ENCODE measurements at regions of chr7 and their contacts with region 1.

Region 1: DNA sequence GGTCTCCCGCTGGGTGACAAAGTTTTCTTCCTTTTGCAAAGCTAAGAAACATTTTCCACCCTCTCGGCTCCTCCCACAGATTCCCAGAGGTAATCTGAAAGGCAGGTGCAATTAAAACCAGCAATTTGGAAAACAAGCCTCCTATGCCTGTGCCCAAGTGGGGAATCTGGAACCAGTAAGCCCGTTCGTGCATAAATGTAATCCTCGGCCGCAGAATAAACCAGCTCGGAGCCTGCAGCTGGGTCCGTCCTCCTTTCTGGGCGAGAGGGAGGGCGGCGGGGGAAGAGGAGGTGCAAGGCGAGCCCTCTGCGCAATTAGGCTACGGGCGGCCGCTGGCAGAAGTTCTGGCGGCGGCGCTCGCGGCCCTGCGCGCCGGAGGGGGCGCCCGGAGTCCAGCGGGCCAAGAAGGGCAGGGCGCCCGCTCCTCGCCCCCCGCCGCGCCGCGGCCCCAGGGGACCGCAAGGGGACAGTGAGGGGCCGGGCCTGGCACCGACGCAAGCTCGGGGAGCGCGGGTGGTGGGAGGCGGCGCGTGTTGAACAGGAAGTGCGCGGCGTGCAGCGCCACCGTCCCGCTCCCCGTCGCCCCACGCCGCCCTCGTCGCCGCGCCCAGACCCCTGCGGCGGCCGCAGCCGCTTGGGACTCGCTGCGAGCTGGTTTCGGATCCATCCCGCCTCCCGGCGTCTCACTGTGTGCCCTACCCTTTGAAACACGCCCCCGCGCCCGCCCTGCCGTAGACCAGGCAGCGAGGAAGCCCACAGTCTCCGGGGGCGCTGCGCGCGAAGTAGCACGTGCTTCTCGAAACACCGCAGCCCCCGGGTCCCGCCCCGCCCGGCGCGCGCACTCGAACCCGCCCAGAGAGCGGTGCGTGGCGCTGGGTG is at the start of gene PRKAG2:
- DNase-seq: peak in 1 of 2 donors; percentile 87
- H3K4me3 ChIP-seq: peak within 1 kb of the TSS; percentile 93 to 95
- H3K27ac ChIP-seq: peak within 1 kb of the TSS; percentile 76 to 78
- H3K4me1 ChIP-seq: peaks cover 5 to 18% of the 10 kb centered on the region in 2 donors
- H3K27me3 ChIP-seq: no peaks in the 10 kb centered on the region
- CTCF ChIP-seq: peak in 1 of 3 experiments; percentile 3
- total RNA-seq, gene PRKAG2: 26.7 TPM

Region 2: DNA sequence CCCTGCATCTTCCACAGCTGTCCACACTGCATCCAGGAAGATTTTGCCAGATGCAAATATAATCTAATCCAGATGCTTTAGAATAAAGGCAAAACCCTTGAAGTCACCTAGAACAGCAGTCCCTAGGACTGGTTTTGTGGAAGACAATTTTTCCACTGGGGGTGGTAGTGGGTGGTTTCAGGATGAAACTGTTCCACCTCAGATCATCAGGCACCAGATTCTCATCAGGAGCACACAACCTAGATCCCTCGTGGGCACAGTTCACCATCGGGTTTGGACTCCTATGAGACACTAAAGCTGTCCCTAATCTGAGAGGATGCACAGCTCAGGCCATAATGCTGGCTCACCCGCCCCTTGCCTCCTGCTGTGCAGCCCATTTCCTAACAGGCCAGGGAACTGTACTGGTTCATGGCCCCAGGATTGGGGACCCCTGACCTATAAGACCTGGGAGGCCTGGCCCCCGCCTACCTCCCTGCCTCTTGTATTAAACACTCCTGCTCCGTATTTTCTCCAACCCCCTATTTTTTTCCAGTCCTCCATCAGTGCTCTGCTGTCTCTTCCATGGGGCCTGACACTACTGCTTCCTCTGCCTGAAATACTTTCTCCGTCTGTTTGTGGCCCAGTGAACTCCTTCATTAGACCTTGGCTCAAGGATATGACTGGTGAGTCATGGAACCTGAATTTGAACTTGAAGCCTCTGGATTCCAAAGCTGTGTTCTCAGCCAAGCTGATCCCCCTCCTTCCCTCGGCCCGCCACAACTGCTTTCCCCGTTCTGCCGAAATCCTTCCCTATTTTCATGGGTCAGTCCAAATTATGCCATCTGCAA is 277.5 kb before region 1 on chr7:
- intact Hi-C with region 1: loop called (anchors 10 kb)
- DNase-seq: peak in 1 of 2 donors; percentile 74
- H3K4me3 ChIP-seq: no peak overlapping the region
- H3K27ac ChIP-seq: peak overlapping the region; percentile 71 to 85
- H3K4me1 ChIP-seq: peaks cover 0 to 23% of the 10 kb centered on the region in 2 donors
- H3K27me3 ChIP-seq: no peaks in the 10 kb centered on the region
- CTCF ChIP-seq: no peak

Region 3: GRCh38 chr7:151648429-151648828 is 228.7 kb before region 1 on chr7:
- intact Hi-C with region 1: no loop called
- DNase-seq: peak in 1 of 2 donors; percentile 37
- H3K4me3 ChIP-seq: no peak overlapping the region
- H3K27ac ChIP-seq: no peak overlapping the region
- H3K4me1 ChIP-seq: peaks cover 7 to 13% of the 10 kb centered on the region in 2 donors
- H3K27me3 ChIP-seq: no peaks in the 10 kb centered on the region
- CTCF ChIP-seq: no peak

Region 4: DNA sequence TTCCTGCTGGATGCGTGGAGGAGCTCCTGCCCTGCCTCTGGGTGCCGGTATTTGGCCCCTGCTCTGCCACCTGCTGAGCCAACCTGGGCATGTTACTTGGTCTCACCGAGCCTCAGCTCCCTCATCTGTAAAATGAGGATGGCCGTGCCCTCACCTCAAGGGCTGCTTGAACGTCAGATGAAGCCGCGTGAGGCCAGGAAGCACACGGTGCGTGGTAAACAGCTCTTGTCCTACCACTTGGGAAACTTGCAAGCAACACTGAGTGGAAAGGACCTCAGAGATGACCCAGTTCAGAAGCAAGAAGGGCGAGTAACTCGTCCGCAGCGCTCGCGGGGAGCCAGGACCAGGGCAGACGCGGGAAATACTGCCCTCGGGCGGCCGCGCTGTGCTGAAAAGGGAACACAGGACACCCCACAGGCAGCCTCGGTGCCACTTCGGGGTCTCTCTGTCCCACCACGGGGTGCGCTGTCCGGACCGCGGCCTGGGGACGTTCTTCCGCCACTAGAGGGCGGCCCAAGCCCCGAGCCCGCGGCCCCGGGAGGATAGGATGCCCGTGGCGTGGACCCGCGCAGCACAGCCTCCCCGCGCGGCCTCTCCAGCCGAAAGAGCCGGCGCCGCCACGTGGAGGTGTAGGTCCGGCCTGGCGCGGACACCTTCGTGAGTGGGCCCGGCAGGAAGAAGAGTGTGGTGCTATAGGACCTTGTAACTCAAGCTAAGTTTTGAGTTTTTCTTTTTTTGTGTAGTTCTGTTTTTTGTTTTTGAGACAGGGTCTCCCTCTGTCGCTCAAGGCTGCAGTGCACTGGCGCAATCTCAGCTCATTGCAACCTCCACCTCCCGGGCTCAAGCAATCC is 94.3 kb before region 1 on chr7:
- intact Hi-C with region 1: loop called (anchors 5 kb)
- DNase-seq: peak in 1 of 2 donors; percentile 83
- H3K4me3 ChIP-seq: peak overlapping the region; percentile 31 to 43
- H3K27ac ChIP-seq: no peak overlapping the region
- H3K4me1 ChIP-seq: peaks cover 0 to 9% of the 10 kb centered on the region in 2 donors
- H3K27me3 ChIP-seq: no peaks in the 10 kb centered on the region
- CTCF ChIP-seq: peak; percentile 82 to 87 (median 87)

Region 5: DNA sequence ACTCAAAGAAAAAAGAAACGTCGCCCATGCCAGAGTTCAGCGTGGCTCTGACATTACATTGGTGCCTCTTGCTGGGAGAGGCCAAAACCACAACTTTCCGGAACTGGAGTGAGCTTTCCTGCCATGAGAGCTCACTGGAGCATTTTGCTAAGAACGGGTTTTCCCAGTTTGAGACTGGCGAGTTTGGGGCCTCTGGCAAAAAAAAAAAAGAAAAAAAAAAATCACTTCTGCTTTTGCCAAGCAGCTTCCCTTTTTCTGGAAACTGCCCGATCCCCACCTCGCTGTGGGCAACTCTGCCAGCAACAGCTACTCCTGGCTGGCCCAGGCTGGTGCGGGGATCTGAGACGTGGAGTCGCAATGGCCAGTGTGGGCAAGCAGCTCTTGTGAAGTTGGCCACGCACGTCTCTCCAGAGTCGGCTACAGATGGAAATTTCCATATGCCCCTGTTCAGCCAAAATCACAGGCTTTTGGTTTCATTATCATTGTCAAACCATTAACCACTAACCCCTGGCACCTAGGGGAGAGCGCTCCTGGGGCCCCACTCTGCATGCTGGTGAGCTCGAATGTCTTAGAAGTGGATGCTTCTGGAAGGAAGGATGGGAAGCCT is 25.9 kb before region 1 on chr7:
- intact Hi-C with region 1: loop called (anchors 2 kb)
- DNase-seq: peak in 1 of 2 donors; percentile 8
- H3K4me3 ChIP-seq: peak overlapping the region; percentile 33 to 58
- H3K27ac ChIP-seq: peak overlapping the region in 1 of 2 donors; percentile 29
- H3K4me1 ChIP-seq: peaks cover 0 to 3% of the 10 kb centered on the region in 2 donors
- H3K27me3 ChIP-seq: no peaks in the 10 kb centered on the region
- CTCF ChIP-seq: no peak